Endothelial cell of umbilical vein (primary cell): ENCODE measurements at regions of chr3 and their contacts with region 1.

Region 1: GRCh38 chr3:188362405-188362831 is 208.5 kb downstream of the LPP start:
- DNase-seq: peak; percentile 84
- H3K4me3 ChIP-seq: no peak overlapping the region
- H3K27ac ChIP-seq: peak overlapping the region; percentile 66
- H3K4me1 ChIP-seq: peaks cover 36% of the 10 kb centered on the region
- H3K27me3 ChIP-seq: no peaks in the 10 kb centered on the region
- CTCF ChIP-seq: no peak
- POLR2A ChIP-seq: no peak

Region 2: DNA sequence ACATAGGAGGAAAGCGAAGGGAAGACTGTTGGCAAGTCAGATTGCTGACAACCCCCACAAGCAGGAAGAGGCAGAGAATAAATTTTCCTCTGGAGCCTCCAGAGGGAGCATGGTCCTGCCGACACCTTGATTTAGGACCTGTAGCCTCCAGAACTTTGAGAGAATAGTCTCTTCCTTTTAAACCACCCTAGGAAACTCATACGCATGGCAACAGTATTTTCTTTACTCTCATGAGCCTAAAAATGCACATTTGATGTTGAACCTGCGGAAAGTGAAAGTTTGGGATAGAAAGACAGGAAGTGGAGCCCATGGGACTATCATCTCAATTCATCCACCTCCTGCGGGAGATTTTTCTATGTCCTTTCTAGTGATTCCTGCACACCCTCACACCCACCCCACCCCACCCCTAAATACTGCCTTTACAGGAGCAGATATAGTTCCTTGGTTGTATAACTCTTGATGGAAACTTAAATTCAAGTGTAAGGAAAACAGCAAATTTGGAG is 325.2 kb before region 1 on chr3:
- CTCF ChIA-PET with region 1: no interaction called
- POLR2A ChIA-PET with region 1: no interaction called
- dilution Hi-C with region 1: no loop called
- intact Hi-C with region 1: loop called (anchors 10 kb)
- DNase-seq: peak; percentile 43
- H3K4me3 ChIP-seq: no peak overlapping the region
- H3K27ac ChIP-seq: no peak overlapping the region
- H3K4me1 ChIP-seq: no peaks in the 10 kb centered on the region
- H3K27me3 ChIP-seq: peaks cover 0 to 2% of the 10 kb centered on the region in 2 experiments
- CTCF ChIP-seq: peak in 1 of 2 donors; percentile 44
- POLR2A ChIP-seq: no peak

Region 3: DNA sequence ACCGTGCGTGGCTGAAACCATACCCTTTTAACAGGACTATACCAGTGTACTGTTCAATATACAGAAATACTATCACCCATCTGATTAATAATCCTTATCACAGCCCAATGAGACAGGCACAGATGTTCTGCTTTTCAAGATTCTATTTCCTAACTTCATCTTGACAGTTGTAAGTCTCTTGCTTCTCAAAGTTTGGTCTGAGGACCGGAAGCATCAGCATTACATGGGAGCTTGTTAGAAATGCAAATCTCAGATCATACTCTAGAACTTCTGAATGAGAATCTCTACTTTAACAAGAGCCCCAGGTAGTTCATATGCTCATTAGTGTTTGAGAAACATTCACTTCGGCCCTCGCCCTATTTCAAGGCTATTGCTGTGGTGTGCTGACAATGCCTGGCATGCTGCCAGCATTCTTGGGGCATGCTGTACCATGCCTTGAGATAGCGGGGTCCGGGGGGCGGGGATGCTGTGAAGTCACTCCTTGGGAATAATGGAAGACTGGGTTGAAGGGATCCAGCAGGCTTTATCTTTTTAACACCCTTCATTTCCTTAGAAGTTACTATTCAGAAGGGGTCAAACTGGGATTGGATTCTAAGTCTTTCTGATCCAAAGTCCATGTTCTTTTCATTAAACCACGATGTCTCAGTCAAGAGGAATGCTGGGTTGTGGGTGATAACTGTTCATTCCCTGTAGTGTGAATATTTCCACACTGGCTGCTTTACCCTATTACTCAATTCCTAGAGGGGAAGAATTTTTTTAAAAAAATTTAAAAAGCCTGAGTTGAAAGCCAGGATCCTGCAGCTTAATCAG is 13.8 kb before region 1 on chr3:
- CTCF ChIA-PET with region 1: interaction called, 7 read pairs
- POLR2A ChIA-PET with region 1: no interaction called
- dilution Hi-C with region 1: no loop called
- intact Hi-C with region 1: loop called (anchors 1 kb)
- DNase-seq: peak; percentile 88
- H3K4me3 ChIP-seq: no peak overlapping the region
- H3K27ac ChIP-seq: peak overlapping the region; percentile 62
- H3K4me1 ChIP-seq: peaks cover 28% of the 10 kb centered on the region
- H3K27me3 ChIP-seq: no peaks in the 10 kb centered on the region
- CTCF ChIP-seq: no peak
- POLR2A ChIP-seq: no peak

Region 4: GRCh38 chr3:188507244-188507720 is 144.9 kb after region 1 on chr3:
- CTCF ChIA-PET with region 1: no interaction called
- POLR2A ChIA-PET with region 1: no interaction called
- dilution Hi-C with region 1: no loop called
- intact Hi-C with region 1: loop called (anchors 2 kb)
- DNase-seq: peak; percentile 83
- H3K4me3 ChIP-seq: no peak overlapping the region
- H3K27ac ChIP-seq: peak overlapping the region; percentile 33
- H3K4me1 ChIP-seq: peaks cover 25% of the 10 kb centered on the region
- H3K27me3 ChIP-seq: no peaks in the 10 kb centered on the region
- CTCF ChIP-seq: no peak
- POLR2A ChIP-seq: no peak

Region 5: DNA sequence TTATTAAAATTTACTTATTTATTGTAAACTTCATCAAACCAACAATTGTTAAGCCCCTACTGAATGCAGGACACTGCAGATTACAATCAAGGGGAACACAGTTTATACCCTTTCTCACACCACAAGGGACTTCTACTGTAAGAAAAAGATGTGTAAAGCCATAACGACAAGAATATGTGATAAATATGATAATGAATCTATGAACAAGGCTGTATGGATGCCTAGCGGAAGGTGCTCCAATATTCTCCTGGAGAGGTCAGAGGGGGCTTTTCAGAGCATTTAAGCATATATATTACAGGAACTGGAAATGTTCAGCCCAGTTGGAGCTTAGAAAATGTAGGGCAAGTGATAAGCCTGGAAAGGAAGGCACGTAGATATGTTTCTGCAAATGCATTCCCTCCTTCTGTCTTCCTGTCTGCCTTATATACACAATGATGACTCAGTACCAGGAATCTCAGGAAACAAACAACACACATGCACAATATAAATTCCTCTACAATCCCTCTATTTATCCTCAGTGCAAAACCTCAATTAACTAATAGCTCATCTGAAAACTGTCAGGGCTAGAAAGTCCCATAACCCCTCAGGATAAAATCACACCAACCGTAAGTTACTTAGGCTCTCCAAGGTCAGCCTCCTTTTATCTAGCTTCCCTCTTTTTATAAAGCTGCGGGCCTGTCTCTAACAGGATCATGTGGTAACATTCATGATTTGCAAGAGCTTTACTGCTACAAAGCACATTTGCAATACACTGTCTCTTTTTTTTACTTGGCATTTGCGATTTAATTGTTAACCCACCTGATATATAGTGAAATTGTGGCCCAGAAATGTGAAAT is 184.6 kb after region 1 on chr3:
- CTCF ChIA-PET with region 1: no interaction called
- POLR2A ChIA-PET with region 1: no interaction called
- dilution Hi-C with region 1: no loop called
- intact Hi-C with region 1: no loop called
- DNase-seq: peak; percentile 87
- H3K4me3 ChIP-seq: peak overlapping the region in 1 of 3 experiments; percentile 22
- H3K27ac ChIP-seq: peak overlapping the region; percentile 86
- H3K4me1 ChIP-seq: peaks cover 34% of the 10 kb centered on the region
- H3K27me3 ChIP-seq: no peaks in the 10 kb centered on the region
- CTCF ChIP-seq: no peak
- POLR2A ChIP-seq: no peak

Region 6: DNA sequence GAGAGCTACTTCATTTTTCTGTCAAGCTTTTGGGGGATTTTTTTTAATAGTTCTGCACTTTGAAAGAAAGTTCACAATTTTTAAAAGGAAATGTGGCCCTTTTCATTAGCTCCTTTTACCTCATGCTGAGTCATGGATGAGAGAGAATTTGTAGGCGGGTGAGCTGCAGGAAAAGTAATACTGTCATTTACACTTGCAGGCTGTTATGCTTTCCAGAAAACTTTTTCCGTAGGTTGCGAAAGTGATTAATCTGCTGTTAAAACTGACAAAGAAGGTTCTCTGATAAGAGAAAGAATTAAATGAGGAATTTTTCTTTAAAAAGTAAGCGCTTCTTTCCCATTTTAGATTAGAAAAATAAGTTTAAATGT is 221.7 kb after region 1 on chr3:
- CTCF ChIA-PET with region 1: no interaction called
- POLR2A ChIA-PET with region 1: no interaction called
- dilution Hi-C with region 1: no loop called
- intact Hi-C with region 1: loop called (anchors 5 kb)
- DNase-seq: peak; percentile 78
- H3K4me3 ChIP-seq: peak overlapping the region in 2 of 3 experiments; percentile 15 to 41
- H3K27ac ChIP-seq: peak overlapping the region; percentile 79
- H3K4me1 ChIP-seq: peaks cover 20% of the 10 kb centered on the region
- H3K27me3 ChIP-seq: no peaks in the 10 kb centered on the region
- CTCF ChIP-seq: no peak
- POLR2A ChIP-seq: no peak